ENCODE measurements at regions of chr20 and their contacts with region 1.

Region 1: GRCh38 chr20:39264506-39265172 is 302.5 kb downstream of the DHX35 start:
- DNase-seq: no peak
- H3K4me3 ChIP-seq: no peak overlapping the region
- H3K27ac ChIP-seq: no peak overlapping the region
- H3K4me1 ChIP-seq: peaks cover 0 to 12% (median 5%) of the 10 kb centered on the region in 4 donors
- H3K27me3 ChIP-seq: no peaks in the 10 kb centered on the region
- CTCF ChIP-seq: peak; percentile 63 to 81 (median 69)
- EP300 ChIP-seq: no peak
- POLR2A ChIP-seq: no peak

Region 2: GRCh38 chr20:39358052-39358451 is 93.4 kb after region 1 on chr20:
- intact Hi-C with region 1: no loop called
- DNase-seq: no peak
- H3K4me3 ChIP-seq: no peak overlapping the region
- H3K27ac ChIP-seq: no peak overlapping the region
- H3K4me1 ChIP-seq: peaks cover 0 to 10% (median 7%) of the 10 kb centered on the region in 4 donors
- H3K27me3 ChIP-seq: no peaks in the 10 kb centered on the region
- CTCF ChIP-seq: no peak
- EP300 ChIP-seq: no peak
- POLR2A ChIP-seq: no peak

Region 3: GRCh38 chr20:39874049-39874888 is 609.6 kb after region 1 on chr20:
- intact Hi-C with region 1: loop called (anchors 10 kb)
- DNase-seq: no peak
- H3K4me3 ChIP-seq: no peak overlapping the region
- H3K27ac ChIP-seq: no peak overlapping the region
- H3K4me1 ChIP-seq: peaks cover 0 to 29% (median 22%) of the 10 kb centered on the region in 4 donors
- H3K27me3 ChIP-seq: no peaks in the 10 kb centered on the region
- CTCF ChIP-seq: peak; percentile 46 to 60 (median 51)
- EP300 ChIP-seq: no peak
- POLR2A ChIP-seq: no peak

Region 4: DNA sequence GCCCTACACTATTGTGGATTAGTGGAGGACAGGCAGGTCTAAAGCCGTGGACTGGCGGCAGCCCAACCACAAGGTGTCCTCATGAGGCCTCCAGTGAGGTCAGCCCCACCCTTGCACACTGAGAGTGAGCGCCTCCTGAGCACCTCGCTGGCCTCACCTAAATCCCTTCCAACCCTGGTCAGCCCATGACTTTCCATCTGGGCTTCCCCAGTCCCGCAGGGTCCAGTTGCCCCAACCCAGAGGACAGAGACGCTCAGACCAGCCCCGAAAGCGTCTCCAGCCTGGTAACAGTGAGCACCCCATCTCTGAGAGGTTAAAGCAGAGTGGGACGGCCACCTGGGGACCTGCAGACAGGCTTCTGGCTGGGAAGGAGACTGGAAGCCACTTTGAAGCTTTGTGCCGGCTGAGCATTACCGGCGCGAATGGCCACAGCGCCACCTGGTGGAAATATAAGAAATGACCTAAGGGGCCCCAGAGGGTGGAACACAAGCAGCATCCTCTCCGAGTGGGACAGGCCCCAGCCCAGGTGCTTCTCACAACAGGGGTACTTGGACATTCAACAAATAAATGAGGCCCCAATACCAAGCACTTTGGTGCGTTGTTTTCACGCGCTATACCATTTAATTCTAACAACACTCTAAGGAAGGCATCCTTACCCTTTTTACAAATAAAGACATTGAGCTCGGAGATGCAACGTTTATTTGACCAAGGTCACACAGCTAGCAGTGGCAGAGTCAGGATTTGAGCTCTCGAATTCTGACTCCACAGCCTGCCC is 1698.3 kb after region 1 on chr20:
- intact Hi-C with region 1: loop called (anchors 5 kb)
- DNase-seq: peak; percentile 93
- H3K4me3 ChIP-seq: no peak overlapping the region
- H3K27ac ChIP-seq: no peak overlapping the region
- H3K4me1 ChIP-seq: peaks cover 0 to 5% (median 2%) of the 10 kb centered on the region in 4 donors
- H3K27me3 ChIP-seq: no peaks in the 10 kb centered on the region
- CTCF ChIP-seq: peak; percentile 82 to 91 (median 91)
- EP300 ChIP-seq: no peak
- POLR2A ChIP-seq: no peak

Measured in esophagus muscularis mucosa (tissue), 4 donors.